Activated CD8-positive, alpha-beta T cell treated with anti-CD3 and anti-CD28 coated beads for 36 hours (primary cell): ENCODE measurements at regions of chr17 and their contacts with region 1.

Region 1: DNA sequence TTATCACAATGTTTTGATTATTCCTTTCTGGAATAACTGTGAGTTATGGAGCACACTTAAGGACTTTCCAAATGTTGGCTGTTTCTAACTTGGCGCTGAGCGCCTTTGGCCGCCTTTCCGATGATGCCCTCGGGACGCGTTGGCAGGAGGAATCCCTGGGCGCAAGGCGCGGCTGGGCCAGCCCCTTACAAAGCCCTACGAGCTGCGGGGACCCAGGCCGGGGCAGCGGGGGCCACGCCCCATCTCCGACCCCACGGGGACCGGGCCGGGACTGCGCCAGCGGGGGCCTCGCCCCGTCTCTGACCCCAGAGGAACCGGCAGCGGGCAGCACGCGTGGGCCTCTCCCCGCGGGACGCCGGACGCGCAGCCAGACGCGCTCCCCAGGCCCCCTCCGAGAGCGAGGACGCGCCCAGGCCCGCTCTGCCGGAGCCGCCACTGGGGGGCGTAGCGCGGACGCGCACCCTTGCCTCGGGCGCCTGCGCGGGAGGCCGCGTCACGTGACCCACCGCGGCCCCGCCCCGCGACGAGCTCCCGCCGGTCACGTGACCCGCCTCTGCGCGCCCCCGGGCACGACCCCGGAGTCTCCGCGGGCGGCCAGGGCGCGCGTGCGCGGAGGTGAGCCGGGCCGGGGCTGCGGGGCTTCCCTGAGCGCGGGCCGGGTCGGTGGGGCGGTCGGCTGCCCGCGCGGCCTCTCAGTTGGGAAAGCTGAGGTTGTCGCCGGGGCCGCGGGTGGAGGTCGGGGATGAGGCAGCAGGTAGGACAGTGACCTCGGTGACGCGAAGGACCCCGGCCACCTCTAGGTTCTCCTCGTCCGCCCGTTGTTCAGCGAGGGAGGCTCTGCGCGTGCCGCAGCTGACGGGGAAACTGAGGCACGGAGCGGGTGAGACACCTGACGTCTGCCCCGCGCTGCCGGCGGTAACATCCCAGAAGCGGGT is at the start of gene GAA:
- DNase-seq: peak; percentile 86
- ATAC-seq: peak; percentile 89
- H3K4me3 Mint-ChIP-seq: peak within 1 kb of the TSS; percentile 88
- H3K27ac Mint-ChIP-seq: peak within 1 kb of the TSS; percentile 79
- H3K4me1 Mint-ChIP-seq: peaks cover 29% of the 10 kb centered on the region
- H3K27me3 Mint-ChIP-seq: no peaks in the 10 kb centered on the region
- CTCF ChIP-seq: peak; percentile 89
- total RNA-seq, gene GAA: 42.6 to 46.2 TPM

Region 2: DNA sequence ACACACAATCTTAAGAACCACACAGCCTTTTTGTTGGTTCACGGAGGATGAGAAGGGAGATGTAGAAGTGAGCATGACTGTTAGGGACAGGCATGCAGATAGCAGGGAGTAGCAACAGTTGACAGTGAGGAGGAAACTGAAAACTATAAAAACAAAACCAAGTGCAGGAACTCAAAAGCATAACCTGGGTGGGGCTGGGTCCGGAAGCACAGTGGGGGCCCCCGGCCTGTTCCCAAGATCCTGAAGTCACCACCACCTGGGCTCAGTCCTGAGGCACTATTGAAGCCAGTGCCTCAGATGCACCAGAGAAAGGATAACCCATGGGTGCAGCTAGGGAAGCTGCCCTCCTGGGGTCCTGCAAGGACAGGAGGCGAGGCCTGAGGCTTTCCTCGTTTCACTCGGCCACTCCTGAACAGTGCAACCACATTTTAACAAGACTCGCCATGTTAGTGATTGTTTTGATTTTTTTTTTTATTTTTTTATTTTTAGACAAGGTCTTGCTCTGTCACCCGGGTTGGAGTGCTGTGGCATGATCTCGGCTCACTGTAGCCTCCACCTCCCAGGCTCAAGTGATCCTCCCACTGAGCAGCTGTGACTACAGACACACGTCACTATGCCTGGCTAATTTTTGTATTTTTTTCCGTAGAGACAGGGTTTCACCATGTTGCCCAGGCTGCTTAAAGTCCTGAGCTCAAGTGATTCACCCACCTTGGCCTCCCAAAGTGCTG is 234.3 kb before region 1 on chr17:
- CTCF ChIA-PET with region 1: no interaction called
- POLR2A ChIA-PET with region 1: no interaction called
- intact Hi-C with region 1: no loop called
- DNase-seq: no peak
- ATAC-seq: peak; percentile 61
- H3K4me3 Mint-ChIP-seq: no peak overlapping the region
- H3K27ac Mint-ChIP-seq: no peak overlapping the region
- H3K4me1 Mint-ChIP-seq: no peaks in the 10 kb centered on the region
- H3K27me3 Mint-ChIP-seq: peaks cover 7% of the 10 kb centered on the region
- CTCF ChIP-seq: no peak

Region 3: GRCh38 chr17:80008383-80008840 is 92.9 kb before region 1 on chr17:
- CTCF ChIA-PET with region 1: interaction called, 15 read pairs
- POLR2A ChIA-PET with region 1: no interaction called
- intact Hi-C with region 1: no loop called
- DNase-seq: peak; percentile 86
- ATAC-seq: peak; percentile 96
- H3K4me3 Mint-ChIP-seq: no peak overlapping the region
- H3K27ac Mint-ChIP-seq: no peak overlapping the region
- H3K4me1 Mint-ChIP-seq: peaks cover 7% of the 10 kb centered on the region
- H3K27me3 Mint-ChIP-seq: no peaks in the 10 kb centered on the region
- CTCF ChIP-seq: peak; percentile 94

Region 4: GRCh38 chr17:80087346-80088265 is 13.7 kb before region 1 on chr17:
- CTCF ChIA-PET with region 1: interaction called, 23 read pairs
- POLR2A ChIA-PET with region 1: interaction called, 4 read pairs
- intact Hi-C with region 1: no loop called
- DNase-seq: no peak
- ATAC-seq: no peak
- H3K4me3 Mint-ChIP-seq: no peak overlapping the region
- H3K27ac Mint-ChIP-seq: no peak overlapping the region
- H3K4me1 Mint-ChIP-seq: peaks cover 3% of the 10 kb centered on the region
- H3K27me3 Mint-ChIP-seq: no peaks in the 10 kb centered on the region
- CTCF ChIP-seq: no peak

Region 5: GRCh38 chr17:80124351-80124981 is 23.2 kb after region 1 on chr17:
- CTCF ChIA-PET with region 1: interaction called, 10 read pairs
- POLR2A ChIA-PET with region 1: interaction called, 4 read pairs
- intact Hi-C with region 1: no loop called
- DNase-seq: no peak
- ATAC-seq: no peak
- H3K4me3 Mint-ChIP-seq: no peak overlapping the region
- H3K27ac Mint-ChIP-seq: no peak overlapping the region
- H3K4me1 Mint-ChIP-seq: no peaks in the 10 kb centered on the region
- H3K27me3 Mint-ChIP-seq: peaks cover 13% of the 10 kb centered on the region
- CTCF ChIP-seq: no peak

Region 6: DNA sequence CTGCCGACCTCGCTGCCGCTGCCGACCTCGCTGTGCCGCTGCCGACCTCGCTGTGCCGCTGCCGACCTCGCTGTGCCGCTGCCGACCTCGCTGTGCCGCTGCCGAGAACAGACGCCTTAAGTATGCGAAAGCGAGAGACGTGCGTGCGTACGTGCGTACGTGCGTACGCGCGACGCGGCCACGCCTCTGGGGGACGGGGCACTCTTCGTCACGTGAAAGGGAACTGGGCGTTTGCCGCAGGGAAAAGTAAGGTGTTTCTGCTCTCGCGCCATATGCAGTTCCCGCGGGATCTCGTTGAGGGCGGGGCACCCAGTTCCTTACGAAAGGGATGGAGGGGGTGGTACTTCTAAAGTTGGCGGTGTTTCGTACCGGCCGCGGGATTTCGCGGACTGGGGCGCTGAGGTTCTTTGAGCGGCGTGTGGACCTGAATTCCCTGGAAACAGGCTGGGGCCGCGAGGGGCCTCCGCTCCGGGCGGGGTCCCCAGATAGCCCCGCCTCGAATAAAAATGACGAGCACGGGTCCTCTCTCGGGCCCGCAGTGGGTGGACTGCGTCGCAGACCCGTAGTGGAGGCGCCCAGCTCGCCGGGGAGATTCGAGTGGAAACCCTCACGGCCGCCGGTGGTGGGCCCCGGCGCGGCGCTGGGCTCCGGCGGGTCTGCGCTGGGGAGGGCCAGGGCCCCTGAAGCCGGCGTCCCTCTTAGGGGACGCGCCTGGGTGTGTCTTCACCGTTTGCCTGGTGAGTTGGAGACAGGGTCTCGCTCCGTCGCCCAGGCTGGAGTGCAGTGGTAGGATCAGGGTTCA is 46.0 kb after region 1 on chr17 and contains the start of gene EIF4A3:
- CTCF ChIA-PET with region 1: interaction called, 18 read pairs
- POLR2A ChIA-PET with region 1: interaction called, 14 read pairs
- intact Hi-C with region 1: no loop called
- DNase-seq: peak; percentile 99
- ATAC-seq: peak; percentile 93
- H3K4me3 Mint-ChIP-seq: peak within 1 kb of the TSS; percentile 84
- H3K27ac Mint-ChIP-seq: peak within 1 kb of the TSS; percentile 94
- H3K4me1 Mint-ChIP-seq: peaks cover 36% of the 10 kb centered on the region
- H3K27me3 Mint-ChIP-seq: no peaks in the 10 kb centered on the region
- CTCF ChIP-seq: no peak
- total RNA-seq, gene EIF4A3: 178 to 183 TPM

Region 7: GRCh38 chr17:80246266-80246681 is 145.0 kb after region 1 on chr17:
- CTCF ChIA-PET with region 1: no interaction called
- POLR2A ChIA-PET with region 1: no interaction called
- intact Hi-C with region 1: no loop called
- DNase-seq: no peak
- ATAC-seq: no peak
- H3K4me3 Mint-ChIP-seq: no peak overlapping the region
- H3K27ac Mint-ChIP-seq: no peak overlapping the region
- H3K4me1 Mint-ChIP-seq: no peaks in the 10 kb centered on the region
- H3K27me3 Mint-ChIP-seq: no peaks in the 10 kb centered on the region
- CTCF ChIP-seq: no peak